Common myeloid progenitor, CD34-positive (primary cell): ENCODE measurements at regions of chr7 and their contacts with region 1.

Region 1: GRCh38 chr7:151244196-151244840 is 4.2 kb downstream of the SMARCD3 start:
- DNase-seq: peak; percentile 72 to 85 (median 77)
- H3K4me3 ChIP-seq: peak overlapping the region in 2 of 7 experiments; percentile 51 to 56
- H3K27ac ChIP-seq: no peak overlapping the region
- H3K4me1 ChIP-seq: peaks cover 5 to 53% (median 50%) of the 10 kb centered on the region in 4 experiments
- H3K27me3 ChIP-seq: peaks cover 0 to 46% (median 20%) of the 10 kb centered on the region in 5 experiments

Region 2: GRCh38 chr7:151139071-151139790 is 105.1 kb before region 1 on chr7:
- CTCF ChIA-PET with region 1: interaction called, 11 read pairs
- POLR2A ChIA-PET with region 1: no interaction called
- DNase-seq: no peak
- H3K4me3 ChIP-seq: no peak overlapping the region
- H3K27ac ChIP-seq: no peak overlapping the region
- H3K4me1 ChIP-seq: peaks cover 0 to 2% (median under 1%) of the 10 kb centered on the region in 4 experiments
- H3K27me3 ChIP-seq: no peaks in the 10 kb centered on the region

Region 3: GRCh38 chr7:151218170-151218569 is 26.1 kb before region 1 on chr7:
- CTCF ChIA-PET with region 1: interaction called, 11 read pairs
- POLR2A ChIA-PET with region 1: no interaction called
- DNase-seq: no peak
- H3K4me3 ChIP-seq: no peak overlapping the region
- H3K27ac ChIP-seq: no peak overlapping the region
- H3K4me1 ChIP-seq: no peaks in the 10 kb centered on the region
- H3K27me3 ChIP-seq: no peaks in the 10 kb centered on the region

Region 4: DNA sequence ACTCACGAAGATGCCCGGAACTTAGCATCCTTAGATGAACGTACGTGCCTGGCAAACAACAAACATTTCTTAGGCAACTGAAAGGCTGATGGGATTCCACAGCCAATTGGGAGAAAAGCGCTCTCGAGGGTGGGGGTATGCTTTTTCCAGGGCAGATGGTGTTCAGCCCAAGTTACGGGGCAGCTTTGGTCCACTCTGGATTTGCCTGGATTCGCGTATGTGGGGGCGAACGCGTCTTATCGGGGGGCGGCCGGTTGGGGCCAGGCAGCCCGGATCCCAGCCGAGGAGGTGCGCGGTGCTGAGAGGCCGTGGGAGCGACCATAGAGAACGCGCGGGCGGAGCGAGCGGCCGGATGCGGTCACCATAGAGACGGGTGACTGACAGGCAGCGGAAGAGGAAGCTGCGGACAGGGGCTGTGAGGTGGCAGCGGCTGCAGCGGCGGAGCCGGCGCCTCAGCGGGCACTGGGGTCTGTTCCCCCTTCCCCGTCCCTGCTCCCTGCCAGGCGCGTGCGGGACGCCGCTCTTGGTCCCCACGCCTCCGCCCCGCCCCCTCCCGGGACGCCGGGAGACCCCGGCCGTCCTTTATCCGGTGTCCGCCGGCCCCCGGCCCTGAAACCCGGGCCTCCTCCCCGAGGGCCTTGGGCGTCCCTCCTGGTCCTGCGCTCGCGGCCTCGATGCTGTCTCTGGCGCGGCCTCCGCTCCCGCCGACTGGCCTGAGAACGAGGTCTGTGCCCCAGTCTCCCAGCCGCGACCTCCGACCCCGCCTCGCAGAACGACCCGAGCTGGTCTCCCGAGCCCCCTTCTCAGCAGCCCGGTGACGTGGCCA is 12.0 kb before region 1 on chr7 and contains the start of gene CHPF2:
- CTCF ChIA-PET with region 1: interaction called, 72 read pairs
- POLR2A ChIA-PET with region 1: interaction called, 15 read pairs
- DNase-seq: peak; percentile 90 to 95 (median 94)
- H3K4me3 ChIP-seq: peak within 1 kb of the TSS; percentile 92 to 98 (median 97)
- H3K27ac ChIP-seq: peak within 1 kb of the TSS; percentile 98
- H3K4me1 ChIP-seq: peaks cover 8 to 36% (median 34%) of the 10 kb centered on the region in 4 experiments
- H3K27me3 ChIP-seq: no peaks in the 10 kb centered on the region

Region 5: DNA sequence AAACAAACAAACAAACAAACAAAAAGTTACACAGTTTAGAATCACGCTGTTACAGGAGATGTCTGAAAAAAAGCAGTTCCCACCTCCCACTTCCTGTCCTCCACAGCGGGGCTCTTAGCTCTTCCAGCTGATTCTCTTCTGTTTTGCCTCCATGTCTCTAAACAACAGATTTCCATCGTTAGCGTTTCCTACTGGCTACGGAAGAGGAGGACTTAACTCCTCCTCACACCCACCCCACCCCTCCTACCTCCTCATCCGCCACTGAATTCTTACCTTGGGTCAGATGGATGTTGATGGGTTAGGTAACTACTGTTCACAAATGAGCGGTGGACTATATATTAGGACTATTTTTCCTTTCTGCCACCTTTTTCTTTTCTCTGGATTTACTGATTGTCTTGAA is 60.5 kb after region 1 on chr7:
- CTCF ChIA-PET with region 1: interaction called, 98 read pairs
- POLR2A ChIA-PET with region 1: no interaction called
- DNase-seq: peak in 1 of 3 donors; percentile 15
- H3K4me3 ChIP-seq: no peak overlapping the region
- H3K27ac ChIP-seq: no peak overlapping the region
- H3K4me1 ChIP-seq: peaks cover 0 to 27% (median 21%) of the 10 kb centered on the region in 4 experiments
- H3K27me3 ChIP-seq: peaks cover 0 to 27% (median 8%) of the 10 kb centered on the region in 5 experiments